Activated CD4-positive, alpha-beta memory T cell treated with anti-CD3 and anti-CD28 coated beads, Interleukin-2, amount 10 ng/mL, durations not matched to agents 7 days and 5 days (primary cell): ENCODE measurements at regions of chr16 and their contacts with region 1.

Region 1: GRCh38 chr16:50806099-50807062 is 64.5 kb downstream of the CYLD start:
- DNase-seq: peak; percentile 87
- H3K4me3 Mint-ChIP-seq: peak overlapping the region; percentile 63
- H3K27ac Mint-ChIP-seq: peak overlapping the region; percentile 57
- H3K4me1 Mint-ChIP-seq: peaks cover 12% of the 10 kb centered on the region
- H3K27me3 Mint-ChIP-seq: no peaks in the 10 kb centered on the region

Region 2: DNA sequence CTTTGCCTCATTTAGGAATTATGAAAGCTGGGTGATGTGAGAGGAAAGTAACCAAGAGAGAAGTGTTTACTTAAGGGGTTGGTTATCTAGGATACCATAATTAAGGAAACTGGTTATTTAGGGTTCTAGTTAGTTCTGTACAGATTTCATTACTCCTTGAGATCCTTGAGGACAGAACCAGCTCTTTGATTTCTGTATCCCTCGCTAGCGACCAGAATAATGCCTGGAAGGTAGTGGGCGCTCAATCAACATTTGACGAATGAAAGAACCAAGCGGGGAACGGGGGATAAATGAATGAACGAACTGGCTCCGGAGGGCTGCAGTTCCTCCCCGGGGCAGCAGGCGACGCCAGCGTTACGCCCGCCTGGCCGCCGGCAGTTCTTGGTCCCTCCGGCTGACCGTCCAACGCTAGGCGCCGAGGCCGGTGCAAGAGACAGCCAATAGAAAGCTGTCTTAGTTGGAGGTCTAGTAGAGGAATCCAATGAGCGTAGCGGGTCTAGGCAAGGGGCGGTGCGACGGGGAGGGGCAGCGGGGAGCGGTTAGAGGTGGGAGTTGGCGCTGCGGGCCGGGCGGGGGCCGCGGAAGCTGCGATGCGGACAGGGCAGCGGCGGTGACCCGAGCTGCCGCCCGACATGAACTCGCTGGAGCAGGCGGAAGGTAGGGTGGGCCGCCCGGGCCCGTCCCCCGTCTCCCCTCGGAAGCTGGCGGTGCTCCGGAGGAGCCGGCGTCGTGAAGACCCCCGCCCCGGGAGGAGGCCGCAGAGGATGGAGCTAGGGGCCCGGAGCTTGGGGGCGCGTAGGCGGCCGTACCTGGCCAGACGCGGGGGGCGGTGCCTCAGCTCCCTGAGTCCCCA is 781.5 kb before region 1 on chr16 and contains the start of gene CNEP1R1:
- CTCF ChIA-PET with region 1: interaction called, 24 read pairs
- POLR2A ChIA-PET with region 1: interaction called, 5 read pairs
- DNase-seq: peak; percentile 95
- H3K4me3 Mint-ChIP-seq: peak within 1 kb of the TSS; percentile 96
- H3K27ac Mint-ChIP-seq: peak within 1 kb of the TSS; percentile 87
- H3K4me1 Mint-ChIP-seq: peaks cover 29% of the 10 kb centered on the region
- H3K27me3 Mint-ChIP-seq: peaks cover 5% of the 10 kb centered on the region
- total RNA-seq, gene CNEP1R1: 30.1 to 36.1 TPM

Region 3: DNA sequence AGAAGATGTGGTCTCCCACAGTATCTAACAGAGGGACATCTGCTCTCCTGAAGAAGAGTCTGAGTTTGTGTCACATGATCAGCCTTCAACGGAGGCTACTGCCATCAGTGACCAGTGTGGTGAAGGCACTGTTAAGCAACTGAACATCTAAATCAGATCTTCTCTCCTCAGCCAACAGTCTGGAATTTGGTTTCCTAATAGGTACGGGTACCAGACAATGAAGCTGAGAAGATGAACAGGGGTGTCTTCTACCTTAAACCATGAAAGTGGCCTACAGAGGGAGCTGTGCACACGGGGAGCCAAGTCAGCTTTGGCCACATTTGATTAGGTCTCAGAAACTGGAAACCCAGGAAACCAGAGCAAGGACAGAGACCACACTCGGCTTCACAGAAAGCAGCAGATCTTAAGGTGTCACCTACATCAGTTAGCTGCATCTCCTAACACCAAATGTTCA is 479.4 kb before region 1 on chr16:
- CTCF ChIA-PET with region 1: interaction called, 28 read pairs
- POLR2A ChIA-PET with region 1: interaction called, 6 read pairs
- DNase-seq: peak; percentile 82
- H3K4me3 Mint-ChIP-seq: no peak overlapping the region
- H3K27ac Mint-ChIP-seq: peak overlapping the region; percentile 85
- H3K4me1 Mint-ChIP-seq: peaks cover 72% of the 10 kb centered on the region
- H3K27me3 Mint-ChIP-seq: no peaks in the 10 kb centered on the region

Region 4: GRCh38 chr16:50611332-50611934 is 194.9 kb before region 1 on chr16:
- CTCF ChIA-PET with region 1: interaction called, 11 read pairs
- POLR2A ChIA-PET with region 1: no interaction called
- DNase-seq: no peak
- H3K4me3 Mint-ChIP-seq: no peak overlapping the region
- H3K27ac Mint-ChIP-seq: no peak overlapping the region
- H3K4me1 Mint-ChIP-seq: peaks cover 4% of the 10 kb centered on the region
- H3K27me3 Mint-ChIP-seq: no peaks in the 10 kb centered on the region

Region 5: GRCh38 chr16:50747207-50747956 is 59.0 kb before region 1 on chr16:
- CTCF ChIA-PET with region 1: interaction called, 55 read pairs
- POLR2A ChIA-PET with region 1: no interaction called
- DNase-seq: peak; percentile 35
- H3K4me3 Mint-ChIP-seq: peak overlapping the region; percentile 75
- H3K27ac Mint-ChIP-seq: peak overlapping the region; percentile 97
- H3K4me1 Mint-ChIP-seq: peaks cover 60% of the 10 kb centered on the region
- H3K27me3 Mint-ChIP-seq: no peaks in the 10 kb centered on the region

Region 6: DNA sequence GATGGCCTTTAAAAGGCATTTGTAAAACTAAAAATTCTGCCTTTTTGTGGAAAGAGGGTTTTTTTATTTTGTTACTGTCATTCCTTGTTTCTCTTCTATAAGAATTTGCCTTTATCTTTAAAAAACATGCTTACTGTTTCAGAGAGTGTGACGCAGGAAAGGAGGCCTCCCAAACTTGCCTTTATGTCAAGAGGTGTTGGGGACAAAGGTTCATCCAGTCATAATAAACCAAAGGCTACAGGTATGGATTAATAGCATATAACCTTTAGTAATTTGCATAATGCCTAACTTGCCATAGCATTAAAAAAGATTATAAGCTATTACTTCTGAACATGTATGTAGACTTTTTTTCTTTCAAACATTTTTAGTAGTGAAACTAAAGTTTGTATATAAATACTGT is 30.3 kb before region 1 on chr16:
- CTCF ChIA-PET with region 1: interaction called, 13 read pairs
- POLR2A ChIA-PET with region 1: no interaction called
- DNase-seq: no peak
- H3K4me3 Mint-ChIP-seq: no peak overlapping the region
- H3K27ac Mint-ChIP-seq: no peak overlapping the region
- H3K4me1 Mint-ChIP-seq: peaks cover 57% of the 10 kb centered on the region
- H3K27me3 Mint-ChIP-seq: no peaks in the 10 kb centered on the region